Spleen (tissue), 13 donors: ENCODE measurements at regions of chr2 and their contacts with region 1.

Region 1: DNA sequence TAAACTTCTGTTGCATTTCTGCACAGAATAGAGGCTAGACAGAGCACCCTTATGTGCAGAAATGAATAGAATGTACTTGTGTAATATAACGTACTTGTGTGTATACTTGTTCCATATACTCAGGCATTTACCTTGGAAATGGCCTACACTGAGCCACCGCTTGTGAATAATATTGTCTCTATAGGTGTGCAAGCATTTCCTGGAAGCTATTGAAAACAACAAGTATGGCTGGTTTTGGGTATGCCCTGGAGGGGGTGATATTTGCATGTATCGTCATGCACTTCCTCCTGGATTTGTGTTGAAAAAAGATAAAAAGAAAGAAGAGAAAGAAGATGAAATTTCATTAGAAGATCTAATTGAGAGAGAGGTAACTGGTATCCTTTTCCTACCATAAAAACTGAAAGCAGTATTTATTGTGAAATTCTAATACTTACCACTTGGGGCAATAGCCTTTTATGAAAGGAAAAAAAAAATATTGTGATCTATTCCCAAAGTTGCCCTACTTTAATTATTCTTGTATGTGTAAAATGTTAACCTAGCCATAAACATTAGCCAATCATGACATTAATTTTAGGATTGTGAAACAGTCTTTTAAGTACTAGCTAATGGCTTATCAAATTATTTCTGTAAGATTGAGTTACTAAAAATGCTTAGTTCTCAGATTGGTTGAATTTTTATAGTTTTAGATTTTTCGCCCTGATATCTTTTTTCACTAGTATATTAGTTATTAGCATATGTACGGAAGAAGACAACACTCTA is 18.0 kb downstream of the ZC3H15 start:
- DNase-seq: no peak
- H3K4me3 ChIP-seq: no peak overlapping the region
- H3K27ac ChIP-seq: no peak overlapping the region
- H3K4me1 ChIP-seq: peaks cover 0 to 12% (median 8%) of the 10 kb centered on the region in 6 donors
- H3K27me3 ChIP-seq: no peaks in the 10 kb centered on the region
- CTCF ChIP-seq: peak in 9 of 11 experiments; percentile 18 to 67 (median 59)
- POLR2A ChIP-seq: no peak

Region 2: DNA sequence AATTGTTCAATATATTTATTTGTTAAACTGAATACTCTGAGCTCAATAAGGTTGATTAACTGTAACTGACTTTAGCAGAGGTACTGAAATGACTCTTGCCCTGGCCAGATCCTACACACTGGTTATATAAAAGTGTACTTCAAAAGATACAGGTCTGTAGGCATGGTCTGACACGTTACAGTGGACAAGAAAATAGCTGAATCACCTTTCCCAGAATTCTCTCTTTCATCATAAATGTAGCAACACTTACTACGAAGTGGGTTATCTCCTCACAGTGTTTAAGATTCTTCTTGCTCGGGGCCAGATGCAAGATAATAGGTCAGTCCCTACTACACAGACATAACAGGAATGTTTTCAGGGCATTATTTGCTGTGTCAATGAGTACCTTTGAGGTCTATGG is 125.0 kb before region 1 on chr2:
- intact Hi-C with region 1: no loop called
- DNase-seq: no peak
- H3K4me3 ChIP-seq: no peak overlapping the region
- H3K27ac ChIP-seq: no peak overlapping the region
- H3K4me1 ChIP-seq: no peaks in the 10 kb centered on the region
- H3K27me3 ChIP-seq: no peaks in the 10 kb centered on the region
- CTCF ChIP-seq: no peak
- POLR2A ChIP-seq: no peak

Region 3: DNA sequence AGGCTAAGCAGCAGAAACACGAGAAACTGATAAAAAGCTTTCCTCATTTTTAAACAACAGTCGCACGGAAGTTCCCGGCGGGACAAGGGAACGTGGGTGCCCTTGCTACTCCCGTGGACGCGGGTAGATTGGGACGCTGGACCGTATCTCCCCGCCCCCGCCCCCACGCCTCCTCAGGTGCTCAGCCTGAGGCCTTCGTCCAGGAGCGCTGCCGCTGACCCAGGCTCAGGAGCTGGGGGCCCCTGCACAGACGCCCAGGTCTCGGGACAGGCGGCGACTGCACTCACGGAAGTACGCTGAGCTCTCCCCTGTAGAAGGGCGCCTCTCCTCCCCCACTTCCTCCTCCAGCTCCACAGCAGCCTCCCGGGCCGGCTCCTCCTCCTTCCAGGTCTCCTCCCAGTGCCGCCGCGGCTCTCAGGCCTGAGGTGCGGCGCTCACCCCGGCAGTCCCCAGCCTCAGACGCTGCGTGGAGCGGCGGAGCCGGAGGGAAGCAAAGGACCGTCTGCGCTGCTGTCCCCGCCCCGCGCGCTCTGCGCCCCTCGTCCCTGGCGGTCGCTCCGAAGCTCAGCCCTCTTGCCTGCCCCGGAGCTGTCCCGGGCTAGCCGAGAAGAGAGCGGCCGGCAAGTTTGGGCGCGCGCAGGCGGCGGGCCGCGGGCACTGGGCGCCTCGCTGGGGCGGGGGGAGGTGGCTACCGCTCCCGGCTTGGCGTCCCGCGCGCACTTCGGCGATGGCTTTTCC is 85.8 kb after region 1 on chr2 and contains the start of gene ITGAV:
- intact Hi-C with region 1: loop called (anchors 10 kb)
- DNase-seq: peak; percentile 97
- H3K4me3 ChIP-seq: peak within 1 kb of the TSS; percentile 74 to 95 (median 90)
- H3K27ac ChIP-seq: peak within 1 kb of the TSS; percentile 84 to 97 (median 94)
- H3K4me1 ChIP-seq: peaks cover 20 to 57% (median 49%) of the 10 kb centered on the region in 6 donors
- H3K27me3 ChIP-seq: no peaks in the 10 kb centered on the region
- CTCF ChIP-seq: peak in 1 of 11 experiments; percentile 7
- POLR2A ChIP-seq: peak in 2 of 3 donors; percentile 81 to 89
- total RNA-seq, gene ITGAV: 51.1 to 85.4 (median 65.5) TPM

Region 4: GRCh38 chr2:186641807-186642321 is 137.8 kb after region 1 on chr2:
- intact Hi-C with region 1: loop called (anchors 5 kb)
- DNase-seq: no peak
- H3K4me3 ChIP-seq: no peak overlapping the region
- H3K27ac ChIP-seq: peak overlapping the region in 1 of 8 donors; percentile 6
- H3K4me1 ChIP-seq: peaks cover 0 to 17% (median 0%) of the 10 kb centered on the region in 6 donors
- H3K27me3 ChIP-seq: no peaks in the 10 kb centered on the region
- CTCF ChIP-seq: peak in 10 of 11 experiments; percentile 5 to 68 (median 56)
- POLR2A ChIP-seq: no peak